Activated T-helper 1 cell treated with anti-CD3 and anti-CD28 coated beads, Interleukin-12 subunit alpha, Interleukin-12 subunit beta, Interleukin-2, Interleukin-4 antibody, amounts not matched to agents 30 ng/mL and 10 ng/mL and 1 ng/mL, durations not matched to agents 14 hours and 24 hours and 36 hours (primary cell): ENCODE measurements at regions of chr16 and their contacts with region 1.

Region 1: DNA sequence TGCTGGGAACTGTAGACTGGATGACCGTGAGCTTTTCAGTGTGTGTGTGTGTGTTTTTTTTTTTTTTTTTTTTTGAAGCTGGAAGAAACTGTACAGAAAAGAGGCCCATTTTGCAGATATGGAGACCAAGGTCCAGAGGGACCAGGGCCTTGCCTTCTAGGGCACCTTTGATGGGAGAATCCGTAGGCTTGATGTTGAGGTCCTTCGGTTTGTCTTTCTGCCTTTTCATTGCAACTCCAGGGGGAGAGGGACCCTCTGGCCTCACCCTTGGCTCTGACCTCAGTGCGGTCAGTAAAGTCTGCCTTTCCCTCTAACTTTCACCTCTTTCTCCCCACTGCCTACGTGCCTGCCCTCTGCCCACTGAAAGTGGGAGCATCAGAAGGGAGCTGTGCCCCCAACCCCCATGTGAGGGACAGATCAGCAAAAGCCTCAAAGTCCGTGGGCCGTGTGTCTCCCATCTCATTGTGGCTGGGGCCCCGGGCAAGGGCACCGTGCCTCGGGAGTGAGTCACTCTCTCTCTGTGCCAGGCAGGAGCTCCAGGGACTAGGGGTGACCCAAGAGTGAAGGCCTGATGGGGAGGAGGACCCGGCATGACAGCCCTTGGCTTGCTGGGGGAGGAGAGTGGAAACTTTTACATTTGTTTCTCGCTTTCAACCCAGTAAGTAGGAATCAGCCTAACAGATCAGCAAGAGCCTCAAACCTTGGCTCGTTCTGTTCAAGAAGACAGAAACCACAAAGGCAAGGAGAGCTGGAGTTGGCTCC is 123.6 kb downstream of the CMIP start:
- DNase-seq: no peak
- H3K4me3 Mint-ChIP-seq: peak overlapping the region; percentile 27
- H3K27ac Mint-ChIP-seq: peak overlapping the region; percentile 81
- H3K4me1 Mint-ChIP-seq: peaks cover 20% of the 10 kb centered on the region
- H3K27me3 Mint-ChIP-seq: no peaks in the 10 kb centered on the region

Region 2: DNA sequence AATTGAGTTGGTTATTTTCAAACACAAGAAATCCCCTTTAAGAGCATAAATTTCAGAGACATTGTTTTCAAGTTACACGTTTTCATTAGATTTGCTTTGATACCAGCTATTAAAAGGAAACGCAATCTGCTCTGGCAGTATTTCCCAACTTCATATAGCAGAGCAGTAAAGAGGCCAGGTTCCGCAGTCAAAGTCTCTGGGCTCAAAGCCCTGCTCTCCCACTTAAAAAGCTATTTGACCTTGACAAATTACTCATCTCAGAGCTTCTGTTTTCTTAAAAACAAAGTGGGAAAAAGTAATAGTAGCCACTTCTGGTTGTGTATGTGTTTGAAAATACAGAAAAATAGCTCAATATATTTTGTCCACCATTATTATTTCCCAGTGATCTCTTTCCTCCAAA is 674.1 kb before region 1 on chr16:
- intact Hi-C with region 1: no loop called
- DNase-seq: no peak
- H3K4me3 Mint-ChIP-seq: no peak overlapping the region
- H3K27ac Mint-ChIP-seq: no peak overlapping the region
- H3K4me1 Mint-ChIP-seq: no peaks in the 10 kb centered on the region
- H3K27me3 Mint-ChIP-seq: peaks cover 2% of the 10 kb centered on the region

Region 3: DNA sequence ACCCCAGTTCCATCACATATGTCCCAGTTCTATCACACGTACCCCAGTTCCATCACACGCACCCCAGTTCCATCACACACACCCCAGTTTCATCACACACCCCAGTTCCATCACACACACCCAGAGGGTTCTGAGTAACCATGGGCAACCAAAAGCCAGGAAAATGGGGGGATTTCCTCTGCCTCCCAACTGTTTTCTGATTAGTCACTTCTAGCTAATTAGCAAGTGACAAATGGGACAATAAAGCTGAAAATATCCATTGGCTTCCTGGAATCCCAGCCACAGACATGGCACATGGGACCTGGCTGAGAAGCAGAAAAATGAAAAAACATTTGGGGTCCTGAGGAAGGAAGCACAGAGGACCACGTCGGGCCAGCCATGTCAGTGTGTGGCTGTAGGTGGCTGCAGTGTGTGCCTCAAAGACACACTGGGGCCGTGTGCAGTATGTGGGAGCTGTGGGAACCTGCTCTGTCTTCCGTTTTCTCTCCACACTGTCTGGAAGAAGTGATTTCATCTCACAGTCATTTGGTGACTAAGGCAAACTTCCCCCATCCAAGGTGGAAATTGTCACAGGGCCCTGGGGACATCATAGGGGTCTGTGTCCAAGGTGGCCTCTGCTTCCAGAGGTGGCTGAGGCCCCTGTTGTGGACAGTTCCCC is 16.9 kb before region 1 on chr16:
- intact Hi-C with region 1: loop called (anchors 2 kb)
- DNase-seq: no peak
- H3K4me3 Mint-ChIP-seq: no peak overlapping the region
- H3K27ac Mint-ChIP-seq: peak overlapping the region; percentile 78
- H3K4me1 Mint-ChIP-seq: peaks cover 43% of the 10 kb centered on the region
- H3K27me3 Mint-ChIP-seq: no peaks in the 10 kb centered on the region

Region 4: DNA sequence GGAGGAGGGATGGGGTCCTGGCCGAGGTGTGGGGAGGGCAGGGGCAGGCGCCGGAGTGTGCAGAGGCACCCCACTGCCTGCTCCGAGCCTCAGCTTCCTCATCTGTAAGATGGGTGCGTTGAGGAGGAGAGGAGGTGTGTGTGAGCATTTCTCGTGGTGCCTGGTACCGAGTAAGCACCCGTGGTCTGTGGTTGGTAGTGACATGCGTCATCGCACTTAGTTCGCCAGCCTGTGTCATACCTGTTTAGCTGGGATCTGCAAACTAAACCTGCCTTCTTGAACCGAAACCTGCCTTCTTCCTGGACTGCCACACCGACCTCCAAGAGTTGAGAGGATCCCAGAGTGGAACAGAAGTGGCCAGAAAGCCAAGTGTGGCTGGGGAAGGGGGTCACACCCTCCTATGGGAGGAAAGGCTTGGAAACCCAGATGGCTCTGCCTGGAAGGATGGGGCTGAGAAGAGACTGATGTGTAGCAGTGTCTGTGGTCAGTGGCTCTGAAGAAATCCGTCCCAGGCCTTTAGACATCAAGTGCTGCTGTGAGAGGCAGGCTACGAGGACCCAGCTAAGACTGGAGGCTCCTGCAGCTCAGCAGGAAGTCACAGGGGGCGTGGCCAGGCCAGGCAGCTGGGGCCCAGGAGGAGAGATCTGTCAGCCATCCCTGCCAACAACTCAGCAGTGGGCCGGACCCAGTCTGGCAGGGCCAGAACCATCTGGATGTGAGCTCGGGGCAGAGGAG is 48.3 kb after region 1 on chr16:
- intact Hi-C with region 1: loop called (anchors 2 kb)
- DNase-seq: peak; percentile 70
- H3K4me3 Mint-ChIP-seq: peak overlapping the region; percentile 62
- H3K27ac Mint-ChIP-seq: peak overlapping the region; percentile 93
- H3K4me1 Mint-ChIP-seq: peaks cover 19% of the 10 kb centered on the region
- H3K27me3 Mint-ChIP-seq: no peaks in the 10 kb centered on the region